ENCODE measurements at regions of chr12 and their contacts with region 1.

Region 1: GRCh38 chr12:15522565-15523187 is 200.4 kb downstream of the PTPRO start:
- DNase-seq: peak; percentile 42
- ATAC-seq: no peak
- H3K4me3 ChIP-seq: no peak overlapping the region
- H3K4me3 Mint-ChIP-seq: no peak overlapping the region
- H3K27ac ChIP-seq: no peak overlapping the region
- H3K27ac Mint-ChIP-seq: no peak overlapping the region
- H3K4me1 ChIP-seq: peaks cover 0 to 5% of the 10 kb centered on the region in 2 donors
- H3K4me1 Mint-ChIP-seq: peaks cover 6% of the 10 kb centered on the region
- H3K27me3 ChIP-seq: no peaks in the 10 kb centered on the region
- H3K27me3 Mint-ChIP-seq: peaks cover 24% of the 10 kb centered on the region
- CTCF ChIP-seq: peak; percentile 66

Region 2: DNA sequence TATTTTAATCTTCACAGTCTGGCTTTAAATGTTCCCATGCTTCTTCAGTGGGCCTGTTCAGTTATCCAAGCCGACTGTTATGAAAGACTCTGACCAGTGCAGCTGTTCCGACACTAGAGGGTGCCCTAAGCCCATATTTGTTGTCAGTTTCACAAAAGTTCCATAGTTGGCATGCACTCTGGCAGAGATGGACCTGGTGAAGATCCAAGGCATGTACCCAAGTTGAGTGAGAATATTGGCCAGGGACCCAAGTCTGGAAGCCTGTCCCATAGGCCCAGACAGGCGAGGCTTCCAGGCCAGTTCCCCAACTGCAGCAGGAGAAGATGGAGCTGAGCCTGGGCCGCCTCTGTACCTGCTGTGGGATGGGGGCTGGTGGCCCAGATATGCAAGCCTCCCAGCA is 798.9 kb before region 1 on chr12:
- CTCF ChIA-PET with region 1: interaction called, 9 read pairs
- POLR2A ChIA-PET with region 1: no interaction called
- intact Hi-C with region 1: loop called (anchors 5 kb)
- DNase-seq: peak; percentile 65
- ATAC-seq: peak; percentile 56
- H3K4me3 ChIP-seq: no peak overlapping the region
- H3K4me3 Mint-ChIP-seq: no peak overlapping the region
- H3K27ac ChIP-seq: no peak overlapping the region
- H3K27ac Mint-ChIP-seq: no peak overlapping the region
- H3K4me1 ChIP-seq: no peaks in the 10 kb centered on the region
- H3K4me1 Mint-ChIP-seq: no peaks in the 10 kb centered on the region
- H3K27me3 ChIP-seq: no peaks in the 10 kb centered on the region
- H3K27me3 Mint-ChIP-seq: peaks cover 13% of the 10 kb centered on the region
- CTCF ChIP-seq: peak; percentile 79

Region 3: DNA sequence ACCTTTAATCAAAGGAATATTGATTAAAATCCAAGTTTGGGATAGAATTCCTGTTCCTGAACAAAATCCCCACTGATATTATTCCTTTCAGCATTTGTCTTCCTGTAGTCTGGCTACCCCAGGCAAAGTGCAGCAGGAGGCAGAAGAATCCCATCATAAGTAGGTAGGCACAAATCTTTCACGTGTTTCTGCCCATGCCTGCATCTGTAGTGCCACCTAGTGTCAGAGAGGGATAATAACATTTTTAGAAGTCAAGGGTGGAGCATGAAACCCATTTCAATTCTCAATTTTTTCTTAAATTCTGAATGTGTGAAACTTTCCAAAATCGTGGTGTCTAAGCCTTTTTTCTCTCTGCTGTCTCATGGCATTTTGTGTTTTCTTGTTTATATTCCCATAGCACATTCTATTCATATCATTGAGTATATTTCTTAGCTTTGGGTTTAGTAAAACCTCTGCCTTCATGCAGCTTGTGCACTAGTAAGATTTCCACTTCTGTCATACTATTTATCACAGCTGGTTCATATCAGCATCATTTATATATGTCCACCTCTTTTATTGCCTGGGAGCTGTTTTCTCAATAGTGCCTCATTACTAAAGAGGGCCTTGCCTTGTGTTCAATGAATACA is 253.6 kb before region 1 on chr12:
- CTCF ChIA-PET with region 1: interaction called, 4 read pairs
- POLR2A ChIA-PET with region 1: no interaction called
- intact Hi-C with region 1: loop called (anchors 2 kb)
- DNase-seq: peak; percentile 63
- ATAC-seq: peak; percentile 71
- H3K4me3 ChIP-seq: no peak overlapping the region
- H3K4me3 Mint-ChIP-seq: no peak overlapping the region
- H3K27ac ChIP-seq: no peak overlapping the region
- H3K27ac Mint-ChIP-seq: no peak overlapping the region
- H3K4me1 ChIP-seq: no peaks in the 10 kb centered on the region
- H3K4me1 Mint-ChIP-seq: no peaks in the 10 kb centered on the region
- H3K27me3 ChIP-seq: no peaks in the 10 kb centered on the region
- H3K27me3 Mint-ChIP-seq: peaks cover 3% of the 10 kb centered on the region
- CTCF ChIP-seq: peak; percentile 97

Region 4: DNA sequence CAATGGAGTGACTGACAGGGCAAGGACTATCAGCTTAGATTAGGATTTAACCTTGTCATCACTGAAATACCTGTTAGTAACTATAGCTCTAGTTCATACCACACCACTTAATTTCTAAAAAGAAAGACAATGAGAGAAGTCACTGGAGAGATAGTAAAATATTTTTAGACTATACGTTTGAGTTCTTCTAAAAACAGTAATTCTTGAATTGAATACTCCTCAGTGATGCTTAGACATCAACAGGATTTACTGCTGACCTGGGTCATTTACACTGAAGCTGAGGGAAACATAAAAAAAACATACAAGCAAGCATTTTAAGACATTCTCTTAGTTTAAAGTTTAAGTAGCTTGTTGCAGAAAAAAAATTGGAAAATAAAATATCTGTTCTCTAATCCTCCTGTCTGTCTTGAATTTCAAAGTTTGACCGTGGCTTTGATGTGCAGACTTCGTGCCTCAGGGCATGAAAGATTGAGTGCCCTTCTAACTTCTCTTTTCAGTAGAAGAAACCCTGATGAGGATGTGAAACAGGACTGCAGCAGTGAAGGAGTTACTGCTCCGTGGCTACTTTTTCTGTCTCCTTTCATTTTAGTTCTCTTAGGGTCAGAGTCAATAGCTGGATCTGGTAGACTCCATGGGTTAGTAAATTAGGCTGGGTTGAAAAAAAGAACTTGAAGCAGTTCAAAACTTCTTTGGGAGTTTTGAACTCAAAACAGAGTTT is 28.2 kb before region 1 on chr12:
- CTCF ChIA-PET with region 1: no interaction called
- POLR2A ChIA-PET with region 1: no interaction called
- intact Hi-C with region 1: no loop called
- DNase-seq: no peak
- ATAC-seq: no peak
- H3K4me3 ChIP-seq: no peak overlapping the region
- H3K4me3 Mint-ChIP-seq: peak overlapping the region; percentile 35
- H3K27ac ChIP-seq: no peak overlapping the region
- H3K27ac Mint-ChIP-seq: no peak overlapping the region
- H3K4me1 ChIP-seq: peaks cover 0 to 5% of the 10 kb centered on the region in 2 donors
- H3K4me1 Mint-ChIP-seq: peaks cover 8% of the 10 kb centered on the region
- H3K27me3 ChIP-seq: no peaks in the 10 kb centered on the region
- H3K27me3 Mint-ChIP-seq: peaks cover 47% of the 10 kb centered on the region
- CTCF ChIP-seq: no peak

Region 5: DNA sequence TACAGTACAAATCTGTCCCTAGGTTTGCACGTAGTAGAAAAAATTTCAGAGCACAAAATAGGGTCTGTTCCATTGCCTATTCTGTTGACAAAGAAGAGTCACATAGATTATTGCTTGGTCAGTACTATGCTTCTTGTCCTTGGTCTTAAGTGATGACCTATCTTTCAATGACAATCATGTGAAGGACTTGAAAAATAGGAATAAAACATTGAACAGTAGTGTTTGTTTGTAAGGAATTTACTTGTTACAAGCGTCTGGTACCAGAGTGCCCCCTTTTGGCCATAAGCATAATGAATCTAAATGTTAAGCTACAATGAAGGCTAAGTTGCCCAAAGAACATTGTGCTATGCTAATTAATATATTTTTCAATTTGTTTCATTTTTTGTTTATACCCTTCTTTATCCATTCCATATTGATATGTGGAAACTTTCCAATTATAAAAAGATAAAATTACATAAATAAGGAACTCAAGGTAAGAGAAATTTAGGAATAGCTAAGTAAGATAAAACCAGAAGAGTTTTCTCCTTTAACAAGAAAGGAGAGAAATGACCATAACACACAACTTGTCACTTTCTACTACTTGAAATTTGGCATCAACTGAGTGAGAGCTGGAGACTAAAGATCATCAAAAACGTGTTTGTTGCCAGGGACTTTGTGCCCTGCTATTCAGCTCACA is 61.8 kb after region 1 on chr12:
- CTCF ChIA-PET with region 1: interaction called, 702 read pairs
- POLR2A ChIA-PET with region 1: no interaction called
- intact Hi-C with region 1: no loop called
- DNase-seq: peak; percentile 76
- ATAC-seq: peak; percentile 63
- H3K4me3 ChIP-seq: no peak overlapping the region
- H3K4me3 Mint-ChIP-seq: no peak overlapping the region
- H3K27ac ChIP-seq: no peak overlapping the region
- H3K27ac Mint-ChIP-seq: peak overlapping the region; percentile 65
- H3K4me1 ChIP-seq: no peaks in the 10 kb centered on the region
- H3K4me1 Mint-ChIP-seq: no peaks in the 10 kb centered on the region
- H3K27me3 ChIP-seq: no peaks in the 10 kb centered on the region
- H3K27me3 Mint-ChIP-seq: no peaks in the 10 kb centered on the region
- CTCF ChIP-seq: peak; percentile 86

Region 6: GRCh38 chr12:15856097-15856982 is 333.7 kb after region 1 on chr12:
- CTCF ChIA-PET with region 1: interaction called, 11 read pairs
- POLR2A ChIA-PET with region 1: no interaction called
- intact Hi-C with region 1: no loop called
- DNase-seq: peak; percentile 71
- ATAC-seq: no peak
- H3K4me3 ChIP-seq: no peak overlapping the region
- H3K4me3 Mint-ChIP-seq: no peak overlapping the region
- H3K27ac ChIP-seq: no peak overlapping the region
- H3K27ac Mint-ChIP-seq: no peak overlapping the region
- H3K4me1 ChIP-seq: no peaks in the 10 kb centered on the region
- H3K4me1 Mint-ChIP-seq: no peaks in the 10 kb centered on the region
- H3K27me3 ChIP-seq: no peaks in the 10 kb centered on the region
- H3K27me3 Mint-ChIP-seq: no peaks in the 10 kb centered on the region
- CTCF ChIP-seq: peak; percentile 91

Region 7: GRCh38 chr12:15984097-15984800 is 461.6 kb after region 1 on chr12:
- CTCF ChIA-PET with region 1: no interaction called
- POLR2A ChIA-PET with region 1: no interaction called
- intact Hi-C with region 1: no loop called
- DNase-seq: no peak
- ATAC-seq: no peak
- H3K4me3 ChIP-seq: no peak overlapping the region
- H3K4me3 Mint-ChIP-seq: no peak overlapping the region
- H3K27ac ChIP-seq: no peak overlapping the region
- H3K27ac Mint-ChIP-seq: peak overlapping the region; percentile 59
- H3K4me1 ChIP-seq: peaks cover 0 to 13% of the 10 kb centered on the region in 2 donors
- H3K4me1 Mint-ChIP-seq: peaks cover 25% of the 10 kb centered on the region
- H3K27me3 ChIP-seq: no peaks in the 10 kb centered on the region
- H3K27me3 Mint-ChIP-seq: no peaks in the 10 kb centered on the region
- CTCF ChIP-seq: no peak

Measured in B cell (primary cell).